K562 (cell line): ENCODE measurements at regions of chr12 and their contacts with region 1.

Region 1: DNA sequence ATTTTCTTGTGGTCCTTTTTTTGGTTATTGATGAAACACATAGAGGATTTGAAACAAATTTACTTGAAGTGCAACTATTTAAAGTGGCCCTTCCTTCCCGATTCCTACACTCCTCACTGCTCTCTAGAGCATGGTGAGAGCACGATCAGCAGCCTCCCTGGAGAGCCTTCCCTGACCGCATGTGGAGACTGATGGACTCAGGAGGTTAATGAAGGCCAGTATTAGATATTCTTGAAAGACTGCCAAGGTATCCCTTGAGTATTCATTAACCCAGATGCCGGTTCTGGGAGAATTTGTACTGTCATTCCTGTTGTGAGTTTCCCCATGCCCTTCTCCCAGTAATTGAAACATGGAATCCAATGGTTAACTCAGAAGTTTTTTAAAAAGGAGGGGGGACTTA is 102.8 kb upstream of the FGD4 start:
- DNase-seq: no peak
- ATAC-seq: no peak
- H3K4me3 ChIP-seq: no peak overlapping the region
- H3K27ac ChIP-seq: no peak overlapping the region
- H3K4me1 ChIP-seq: peaks cover 0 to 3% of the 10 kb centered on the region in 2 experiments; a peak in 1 of 5 replicates
- H3K27me3 ChIP-seq: no peaks in the 10 kb centered on the region
- CTCF ChIP-seq: no peak
- EP300 ChIP-seq: no peak
- POLR2A ChIP-seq: no peak
- RAD21 ChIP-seq: no peak

Region 2: DNA sequence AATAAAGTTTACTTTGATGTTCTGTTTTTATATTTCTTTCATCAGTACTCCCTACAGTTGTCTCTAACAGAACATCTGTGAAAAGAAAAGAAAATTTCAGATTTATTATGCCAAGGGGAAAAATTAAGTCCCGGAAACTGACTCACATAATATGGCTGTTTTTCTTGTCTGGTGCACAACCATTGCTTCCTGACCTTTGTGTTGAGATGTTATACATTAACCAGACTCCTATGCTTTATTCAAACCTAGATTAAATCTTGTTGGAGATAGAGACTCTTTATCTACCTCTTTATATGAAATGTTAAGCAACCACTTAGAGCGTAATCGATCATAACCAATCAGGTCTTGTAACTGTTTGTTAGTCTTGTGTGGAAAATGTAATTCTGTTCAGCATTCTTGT is 227.5 kb before region 1 on chr12:
- CTCF ChIA-PET with region 1: no interaction called
- POLR2A ChIA-PET with region 1: interaction called, 3 read pairs
- in situ Hi-C with region 1: loop called (anchors 5 kb)
- intact Hi-C with region 1: no loop called
- DNase-seq: no peak
- ATAC-seq: no peak
- H3K4me3 ChIP-seq: no peak overlapping the region
- H3K27ac ChIP-seq: no peak overlapping the region
- H3K4me1 ChIP-seq: no peaks in the 10 kb centered on the region
- H3K27me3 ChIP-seq: no peaks in the 10 kb centered on the region
- CTCF ChIP-seq: no peak
- EP300 ChIP-seq: no peak
- POLR2A ChIP-seq: no peak
- RAD21 ChIP-seq: no peak

Region 3: DNA sequence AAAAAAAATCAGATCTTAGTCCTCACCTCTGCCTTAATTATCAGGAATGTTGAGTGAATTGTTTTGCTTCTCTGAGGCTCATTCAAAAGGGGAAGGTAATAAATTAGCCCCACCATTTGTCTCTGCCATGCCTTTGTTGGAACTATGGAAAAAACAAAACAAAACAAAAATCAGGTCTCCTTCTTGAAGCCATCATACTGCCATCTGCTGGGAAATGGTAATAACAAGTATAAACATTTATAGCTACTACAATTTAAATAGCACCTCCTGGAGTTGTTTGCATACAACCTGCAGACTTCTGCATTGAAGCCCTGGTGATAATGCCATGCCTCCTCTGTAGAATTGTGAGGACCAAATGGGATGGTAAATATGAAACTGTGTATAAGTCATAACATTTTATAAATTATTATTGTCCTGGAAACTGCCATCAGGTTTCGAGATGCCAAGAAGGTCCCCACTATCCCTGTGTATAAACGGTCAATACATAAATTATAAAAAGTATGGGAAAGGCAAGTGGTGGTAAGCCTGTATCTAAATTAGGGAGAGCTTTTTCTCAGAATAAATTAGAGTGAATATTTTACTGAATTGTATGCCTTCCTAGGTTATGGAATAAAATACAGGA is 15.6 kb after region 1 on chr12:
- CTCF ChIA-PET with region 1: no interaction called
- POLR2A ChIA-PET with region 1: no interaction called
- in situ Hi-C with region 1: no loop called
- intact Hi-C with region 1: no loop called
- DNase-seq: peak in 2 of 4 experiments; percentile 37 to 60
- ATAC-seq: peak; percentile 73
- H3K4me3 ChIP-seq: no peak overlapping the region
- H3K27ac ChIP-seq: no peak overlapping the region
- H3K4me1 ChIP-seq: no peaks in the 10 kb centered on the region; a peak in 1 of 5 replicates
- H3K27me3 ChIP-seq: no peaks in the 10 kb centered on the region
- CTCF ChIP-seq: peak; percentile 57 to 87 (median 85)
- EP300 ChIP-seq: no peak
- POLR2A ChIP-seq: no peak
- RAD21 ChIP-seq: peak; percentile 73